ENCODE measurements at regions of chr7 and their contacts with region 1.

Region 1: DNA sequence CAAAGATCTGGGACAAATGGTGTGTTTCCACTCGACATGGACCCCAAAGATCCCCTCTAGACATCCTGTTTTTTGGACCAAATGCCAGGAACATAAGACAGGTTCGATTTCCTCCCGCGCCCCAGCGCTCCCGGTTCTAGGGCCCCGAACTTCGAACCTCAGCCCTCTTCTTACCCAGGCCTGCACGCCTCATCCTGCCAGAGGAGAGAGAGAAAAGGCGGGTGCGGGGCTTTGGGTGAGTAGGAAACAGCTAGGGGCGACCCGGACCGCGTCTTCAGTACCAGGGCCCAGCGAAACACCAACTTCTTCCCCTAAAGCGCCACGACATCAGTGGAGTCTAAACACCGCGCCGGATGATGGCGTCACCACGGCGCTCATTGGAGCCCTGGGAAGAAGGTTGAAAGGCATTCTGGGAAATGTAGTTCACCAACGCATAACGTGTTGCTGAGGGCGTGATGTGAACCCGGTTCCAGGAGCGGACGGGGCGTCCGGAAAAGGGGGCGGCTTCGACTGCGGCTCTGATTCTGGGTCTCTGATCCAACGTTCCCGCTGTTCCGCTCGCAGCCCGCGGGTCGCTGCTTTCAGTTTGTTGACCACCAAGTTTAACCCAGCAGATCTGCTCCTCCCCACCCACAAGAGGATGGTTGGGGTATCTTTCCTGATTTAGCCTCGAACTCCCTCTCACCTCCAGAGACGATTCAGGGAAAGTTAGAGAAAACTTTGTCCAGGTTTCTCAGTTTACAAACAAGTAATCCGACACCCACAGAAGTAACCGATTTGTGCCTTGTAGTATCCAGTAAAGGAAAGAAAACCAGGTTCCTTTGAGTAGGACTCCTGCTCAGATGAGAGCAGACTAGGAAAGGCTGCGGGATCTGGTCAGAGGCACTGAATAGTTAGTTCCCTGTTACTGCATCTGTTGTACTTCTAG is at the start of gene BET1:
- DNase-seq: peak; percentile 96 to 97
- H3K4me3 ChIP-seq: peak within 1 kb of the TSS; percentile 70 to 88
- H3K27ac ChIP-seq: peak within 1 kb of the TSS; percentile 87 to 89
- H3K4me1 ChIP-seq: peaks cover 0 to 27% (median 7%) of the 10 kb centered on the region in 4 donors
- H3K27me3 ChIP-seq: no peaks in the 10 kb centered on the region
- CTCF ChIP-seq: no peak

Region 2: GRCh38 chr7:93902777-93903423 is 101.4 kb before region 1 on chr7:
- intact Hi-C with region 1: loop called (anchors 10 kb)
- DNase-seq: no peak
- H3K4me3 ChIP-seq: no peak overlapping the region
- H3K27ac ChIP-seq: no peak overlapping the region
- H3K4me1 ChIP-seq: no peaks in the 10 kb centered on the region
- H3K27me3 ChIP-seq: no peaks in the 10 kb centered on the region
- CTCF ChIP-seq: peak; percentile 55 to 68

Region 3: GRCh38 chr7:94050046-94050445 is 45.8 kb after region 1 on chr7:
- intact Hi-C with region 1: no loop called
- DNase-seq: peak in 1 of 2 donors; percentile 21
- H3K4me3 ChIP-seq: no peak overlapping the region
- H3K27ac ChIP-seq: no peak overlapping the region
- H3K4me1 ChIP-seq: no peaks in the 10 kb centered on the region
- H3K27me3 ChIP-seq: no peaks in the 10 kb centered on the region
- CTCF ChIP-seq: no peak